HEK293 (cell line): ENCODE measurements at regions of chr19 and their contacts with region 1.

Region 1: DNA sequence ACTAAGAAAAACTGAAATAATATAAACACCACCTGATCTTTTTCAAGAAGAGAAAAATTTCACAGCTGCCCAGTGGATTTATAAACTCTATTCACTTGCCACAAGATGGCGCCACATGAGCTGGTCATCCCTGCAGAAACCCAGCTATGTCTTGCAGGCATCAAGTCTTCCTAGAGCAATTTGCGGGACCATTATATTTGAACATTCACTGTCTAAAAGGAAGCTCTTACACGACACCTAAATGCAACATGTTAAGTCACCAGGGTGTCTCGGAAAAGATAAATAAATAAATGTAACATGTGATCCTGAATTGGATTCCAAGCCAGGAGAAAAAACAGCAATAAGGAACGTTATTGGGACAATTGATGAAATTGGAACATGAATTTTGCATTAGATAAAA is 20.3 kb upstream of the AKT2 start:
- H3K4me3 ChIP-seq: no peak overlapping the region
- H3K27ac ChIP-seq: no peak overlapping the region
- H3K4me1 ChIP-seq: peaks cover 13% of the 10 kb centered on the region
- CTCF ChIP-seq: peak; percentile 87; the same call in 1 of the 2 replicates

Region 2: DNA sequence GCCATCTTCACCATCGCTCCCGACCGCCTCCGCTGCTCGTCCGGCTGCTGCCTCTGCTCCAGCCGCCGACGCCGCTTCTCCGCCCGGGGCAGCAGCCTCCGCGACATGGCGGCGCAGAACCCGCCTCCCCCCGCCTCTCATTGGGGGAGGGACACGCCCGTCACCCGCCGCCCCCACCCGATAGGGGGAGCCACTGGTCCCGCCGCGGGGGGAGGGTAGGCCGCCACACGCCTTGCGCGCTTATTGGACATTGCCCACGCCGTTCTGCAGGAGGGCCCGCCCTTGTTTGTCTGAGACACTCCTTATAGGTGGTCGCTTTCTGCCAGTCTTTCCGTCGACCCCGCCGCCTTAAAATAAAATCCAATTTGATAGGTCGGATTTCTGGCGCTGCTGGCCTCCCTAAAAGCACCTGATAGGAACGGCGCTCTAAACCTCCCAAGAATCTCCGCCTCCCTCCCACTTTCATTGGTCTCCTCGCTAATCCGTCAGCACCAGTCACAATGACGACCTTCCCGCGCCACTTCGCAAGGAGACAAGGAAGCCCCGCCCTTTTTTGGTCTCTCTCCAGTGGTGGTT is 1455.5 kb before region 1 on chr19 and contains the start of gene HNRNPL:
- CTCF ChIA-PET with region 1: no interaction called
- POLR2A ChIA-PET with region 1: no interaction called
- H3K4me3 ChIP-seq: peak within 1 kb of the TSS; percentile 57
- H3K27ac ChIP-seq: peak within 1 kb of the TSS; percentile 100
- H3K4me1 ChIP-seq: peaks cover 32% of the 10 kb centered on the region
- CTCF ChIP-seq: peak; percentile 100

Region 3: GRCh38 chr19:40237791-40238190 is 67.6 kb before region 1 on chr19:
- CTCF ChIA-PET with region 1: no interaction called
- POLR2A ChIA-PET with region 1: no interaction called
- H3K4me3 ChIP-seq: no peak overlapping the region
- H3K27ac ChIP-seq: no peak overlapping the region
- H3K4me1 ChIP-seq: no peaks in the 10 kb centered on the region
- CTCF ChIP-seq: no peak

Region 4: DNA sequence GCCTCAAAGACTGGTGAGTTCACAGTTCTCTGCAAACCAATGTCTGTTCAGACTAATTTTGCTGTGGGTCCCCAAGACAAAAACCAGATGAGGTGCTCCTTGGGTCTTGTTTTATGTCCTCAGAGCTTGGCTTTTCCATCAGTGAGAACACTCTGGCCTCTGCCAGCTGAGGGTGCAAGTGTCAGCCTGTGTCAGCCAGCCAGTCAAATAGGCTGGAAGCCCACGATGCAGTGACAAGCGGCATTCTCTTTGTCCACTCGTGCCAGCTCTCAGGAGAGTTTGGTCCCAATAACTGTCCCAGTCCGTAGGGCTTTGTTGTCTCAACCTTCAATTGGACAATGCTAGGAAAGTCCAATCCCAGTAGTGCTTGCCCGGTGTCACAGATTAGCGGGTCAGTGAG is 10.8 kb before region 1 on chr19:
- CTCF ChIA-PET with region 1: interaction called, 59 read pairs
- POLR2A ChIA-PET with region 1: interaction called, 4 read pairs
- H3K4me3 ChIP-seq: no peak overlapping the region
- H3K27ac ChIP-seq: no peak overlapping the region; the same call in 1 of the 2 replicates
- H3K4me1 ChIP-seq: no peaks in the 10 kb centered on the region; the same call in 1 of the 2 replicates
- CTCF ChIP-seq: no peak

Region 5: GRCh38 chr19:40365613-40366401 is 60.4 kb after region 1 on chr19:
- CTCF ChIA-PET with region 1: interaction called, 5 read pairs
- POLR2A ChIA-PET with region 1: interaction called, 11 read pairs
- H3K4me3 ChIP-seq: peak overlapping the region; percentile 41
- H3K27ac ChIP-seq: peak overlapping the region; percentile 54; the same call in 1 of the 2 replicates
- H3K4me1 ChIP-seq: peaks cover 27% of the 10 kb centered on the region
- CTCF ChIP-seq: no peak

Region 6: DNA sequence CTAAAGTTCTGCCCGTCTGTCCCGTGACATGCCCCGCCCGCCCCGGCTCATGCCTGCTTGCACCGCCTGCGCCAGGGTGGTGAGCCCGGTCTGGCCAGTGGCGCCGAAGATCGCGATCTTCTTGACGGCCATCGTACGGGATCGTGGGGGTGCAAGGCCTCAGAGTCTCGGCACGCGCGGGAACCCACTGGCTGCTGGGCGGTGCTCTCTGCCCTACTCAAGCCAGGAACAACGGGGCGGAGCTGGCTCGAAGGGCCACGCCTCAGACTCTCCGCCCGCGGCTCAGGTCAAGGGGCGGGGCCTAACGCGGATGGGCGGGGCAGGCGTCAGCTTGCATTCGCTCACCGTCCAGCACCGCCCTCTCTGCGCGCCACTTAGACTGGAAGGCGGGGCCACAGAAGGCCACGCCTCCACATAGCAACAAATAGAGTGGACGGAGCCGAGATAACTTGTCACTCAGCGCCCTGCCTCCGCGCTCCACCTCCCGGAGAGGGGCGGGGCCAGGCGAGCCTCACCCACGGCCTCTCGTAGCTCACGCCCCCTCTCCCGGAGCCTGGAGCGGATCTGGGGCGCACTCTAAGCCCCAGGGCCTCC is 160.3 kb after region 1 on chr19 and contains the start of gene BLVRB:
- CTCF ChIA-PET with region 1: interaction called, 14 read pairs
- POLR2A ChIA-PET with region 1: interaction called, 5 read pairs
- H3K4me3 ChIP-seq: peak within 1 kb of the TSS; percentile 53
- H3K27ac ChIP-seq: peak within 1 kb of the TSS; percentile 20; the same call in 1 of the 2 replicates
- H3K4me1 ChIP-seq: peaks cover 13% of the 10 kb centered on the region
- CTCF ChIP-seq: no peak

Region 7: DNA sequence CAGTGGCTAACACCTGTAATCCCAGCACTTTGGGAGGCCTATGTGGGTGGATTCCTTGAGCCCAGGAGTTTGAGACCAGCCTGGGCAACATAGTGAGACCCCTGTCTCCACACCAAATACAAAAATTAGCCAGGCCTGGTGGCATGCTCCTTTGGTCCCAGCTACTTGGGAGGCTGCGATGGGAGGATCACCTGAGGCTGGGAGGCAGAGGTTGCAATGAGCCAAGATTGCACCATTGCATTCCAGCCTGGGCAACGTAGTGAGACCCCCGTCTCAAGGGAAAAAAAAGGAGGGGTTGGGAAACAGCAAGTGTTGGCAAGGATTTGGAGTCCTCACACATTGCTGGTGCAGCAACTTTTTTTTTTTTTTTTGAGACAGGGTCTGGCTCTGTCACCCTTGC is 180.6 kb after region 1 on chr19:
- CTCF ChIA-PET with region 1: no interaction called
- POLR2A ChIA-PET with region 1: no interaction called
- H3K4me3 ChIP-seq: no peak overlapping the region
- H3K27ac ChIP-seq: no peak overlapping the region
- H3K4me1 ChIP-seq: no peaks in the 10 kb centered on the region
- CTCF ChIP-seq: no peak

Region 8: GRCh38 chr19:40549007-40549708 is 243.8 kb after region 1 on chr19:
- CTCF ChIA-PET with region 1: interaction called, 12 read pairs
- POLR2A ChIA-PET with region 1: no interaction called
- H3K4me3 ChIP-seq: peak overlapping the region; percentile 2
- H3K27ac ChIP-seq: no peak overlapping the region
- H3K4me1 ChIP-seq: peaks cover 9% of the 10 kb centered on the region
- CTCF ChIP-seq: peak; percentile 98

Region 9: GRCh38 chr19:40633207-40633606 is 327.8 kb after region 1 on chr19:
- CTCF ChIA-PET with region 1: interaction called, 57 read pairs
- POLR2A ChIA-PET with region 1: no interaction called
- H3K4me3 ChIP-seq: no peak overlapping the region
- H3K27ac ChIP-seq: no peak overlapping the region
- H3K4me1 ChIP-seq: no peaks in the 10 kb centered on the region
- CTCF ChIP-seq: no peak